Activated CD4-positive, alpha-beta memory T cell treated with anti-CD3 and anti-CD28 coated beads for 36 hours (primary cell): ENCODE measurements at regions of chr20 and their contacts with region 1.

Region 1: DNA sequence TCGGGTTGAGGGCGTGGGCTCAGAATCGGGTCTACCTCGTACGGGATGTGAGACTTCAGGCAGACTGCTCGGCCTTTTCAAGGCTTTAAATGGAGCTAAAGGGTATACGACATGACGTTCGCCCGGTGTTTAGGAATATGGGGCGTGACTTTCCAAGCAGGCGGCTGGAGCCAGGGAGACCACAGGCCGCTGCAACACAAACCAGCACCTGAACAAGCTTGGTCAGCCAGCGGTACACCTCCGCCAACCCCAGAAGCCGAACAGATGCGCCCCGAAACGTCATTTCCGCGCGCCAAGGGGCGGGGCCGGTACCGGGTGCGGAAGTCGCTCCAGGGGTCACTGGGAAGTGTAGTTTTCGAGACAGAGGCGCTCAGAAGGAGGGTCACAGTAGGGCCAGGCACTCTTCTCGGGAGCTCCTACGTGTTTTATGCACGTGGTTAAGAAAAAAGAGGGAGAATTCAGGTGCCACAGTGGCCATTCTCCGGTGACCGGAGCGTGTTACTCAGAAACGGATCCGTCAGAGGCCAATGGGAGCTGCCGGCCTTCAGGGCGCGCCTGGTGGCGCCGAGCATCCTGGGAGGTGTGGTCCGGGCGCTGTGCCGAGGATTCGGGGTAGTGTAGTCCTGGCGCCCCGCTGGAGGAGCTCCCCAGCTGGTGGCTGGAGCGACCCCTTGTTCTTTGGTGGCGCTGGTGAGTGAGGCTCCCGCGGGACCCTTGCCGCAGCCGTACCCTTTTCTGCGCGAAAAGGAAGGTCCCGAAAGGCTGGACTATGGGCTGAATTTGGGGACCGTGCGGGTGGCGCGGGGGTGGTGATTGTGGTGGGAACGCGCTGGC is at the start of gene ZNF133:
- DNase-seq: peak; percentile 98
- H3K4me3 Mint-ChIP-seq: peak within 1 kb of the TSS; percentile 96
- H3K27ac Mint-ChIP-seq: peak within 1 kb of the TSS; percentile 98
- H3K4me1 Mint-ChIP-seq: peaks cover 14% of the 10 kb centered on the region
- H3K27me3 Mint-ChIP-seq: peaks cover 17% of the 10 kb centered on the region
- total RNA-seq, gene ZNF133: 7.5 to 9.0 TPM

Region 2: GRCh38 chr20:18137412-18138265 is 150.5 kb before region 1 on chr20 and contains the starts of genes KAT14 and PET117:
- CTCF ChIA-PET with region 1: no interaction called
- POLR2A ChIA-PET with region 1: interaction called, 7 read pairs
- intact Hi-C with region 1: loop called (anchors 1 kb)
- DNase-seq: peak; percentile 93
- H3K4me3 Mint-ChIP-seq: peak within 1 kb of the TSS; percentile 65
- H3K27ac Mint-ChIP-seq: peak within 1 kb of the TSS; percentile 76
- H3K4me1 Mint-ChIP-seq: peaks cover 29% of the 10 kb centered on the region
- H3K27me3 Mint-ChIP-seq: no peaks in the 10 kb centered on the region
- total RNA-seq, gene KAT14: 14.2 to 14.4 TPM
- total RNA-seq, gene PET117: 15.2 to 15.9 TPM

Region 3: DNA sequence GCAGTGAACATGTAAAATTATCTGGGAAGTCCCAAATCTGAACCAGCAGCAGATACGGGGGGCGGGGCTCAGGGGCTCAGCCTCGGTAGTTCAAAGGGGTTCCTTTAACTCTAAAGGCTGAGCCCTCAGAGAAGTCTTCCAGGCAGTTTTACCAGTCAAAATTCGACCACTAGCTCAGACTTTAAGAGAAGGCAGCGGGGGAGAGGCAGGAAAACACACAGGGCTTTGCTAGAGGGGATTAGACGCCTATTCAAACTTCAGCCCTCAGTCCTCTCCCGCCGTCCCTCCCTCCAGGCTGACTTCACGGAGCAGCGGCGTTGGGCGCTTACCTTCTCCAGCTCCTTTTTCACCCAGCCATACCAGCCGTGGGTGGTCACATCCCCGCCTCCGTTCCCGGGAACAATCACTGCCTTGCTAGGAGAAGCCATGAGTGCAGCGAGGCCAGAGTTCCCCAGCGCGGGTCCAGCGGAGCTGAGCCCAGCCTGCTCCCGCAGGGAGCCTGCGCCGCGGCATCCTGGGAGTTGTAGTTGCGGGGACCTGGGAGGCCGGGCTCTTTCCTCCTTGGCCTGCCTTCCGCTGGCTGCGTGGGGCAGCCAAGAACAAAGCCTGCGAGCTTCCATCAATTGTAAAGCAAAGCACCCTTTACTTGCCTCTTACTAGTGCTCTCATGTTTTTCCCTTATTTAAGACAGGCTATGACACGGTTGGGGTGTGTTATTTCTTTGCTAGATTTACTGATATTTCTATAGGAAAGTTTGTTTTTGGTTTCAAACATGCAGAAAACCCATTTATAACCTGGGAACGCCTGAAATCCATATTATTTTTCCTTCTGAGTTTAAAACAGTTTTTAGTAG is 208.8 kb after region 1 on chr20 and contains the start of gene RBBP9:
- CTCF ChIA-PET with region 1: no interaction called
- POLR2A ChIA-PET with region 1: no interaction called
- intact Hi-C with region 1: loop called (anchors 2 kb)
- DNase-seq: peak; percentile 87
- H3K4me3 Mint-ChIP-seq: peak within 1 kb of the TSS; percentile 98
- H3K27ac Mint-ChIP-seq: peak within 1 kb of the TSS; percentile 84
- H3K4me1 Mint-ChIP-seq: peaks cover 9% of the 10 kb centered on the region
- H3K27me3 Mint-ChIP-seq: no peaks in the 10 kb centered on the region
- total RNA-seq, gene RBBP9: 15.9 to 17.7 TPM

Region 4: DNA sequence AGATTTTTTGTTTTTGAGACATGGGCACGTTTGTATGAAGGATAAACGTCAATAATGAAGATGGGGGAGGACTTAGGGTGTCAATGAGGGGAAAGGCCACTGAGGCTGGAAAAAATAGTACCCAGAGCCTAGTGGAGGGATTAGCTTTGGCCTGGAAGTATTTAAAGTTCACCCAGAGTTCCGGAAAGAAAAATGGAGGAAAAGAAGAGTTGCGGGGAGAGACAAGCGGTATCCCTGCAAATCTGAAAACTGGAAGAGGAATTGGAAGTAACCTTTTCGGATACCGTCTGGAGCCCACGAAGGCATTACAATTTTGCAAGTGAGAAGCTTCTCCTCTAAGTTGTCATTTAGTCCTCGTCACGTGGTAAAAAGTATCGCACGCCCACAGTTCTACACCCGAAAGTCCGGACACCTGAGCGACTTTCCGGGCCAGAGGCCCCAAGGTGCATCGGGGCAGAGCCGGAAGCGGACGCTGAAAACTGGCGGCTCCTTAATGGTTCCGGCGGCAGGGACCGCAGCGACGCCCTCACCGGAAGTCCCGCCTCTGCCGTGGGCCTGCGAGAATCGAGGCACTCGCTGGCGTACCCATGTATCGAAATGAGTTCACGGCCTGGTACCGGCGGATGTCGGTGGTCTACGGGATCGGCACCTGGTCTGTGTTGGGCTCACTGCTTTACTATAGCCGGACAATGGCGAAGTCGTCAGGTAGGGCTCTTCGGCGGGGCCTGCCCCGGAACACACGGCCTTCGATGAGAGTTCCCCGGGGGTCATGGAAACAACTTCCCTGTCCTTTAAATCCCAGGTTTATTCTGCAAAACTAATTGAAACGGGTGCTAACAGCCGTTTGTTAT is 279.0 kb after region 1 on chr20 and contains the start of gene SMIM26:
- CTCF ChIA-PET with region 1: no interaction called
- POLR2A ChIA-PET with region 1: no interaction called
- intact Hi-C with region 1: loop called (anchors 1 kb)
- DNase-seq: peak; percentile 96
- H3K4me3 Mint-ChIP-seq: peak within 1 kb of the TSS; percentile 90
- H3K27ac Mint-ChIP-seq: peak within 1 kb of the TSS; percentile 91
- H3K4me1 Mint-ChIP-seq: peaks cover 11% of the 10 kb centered on the region
- H3K27me3 Mint-ChIP-seq: no peaks in the 10 kb centered on the region
- total RNA-seq, gene SMIM26: 56.0 to 59.0 TPM

Region 5: GRCh38 chr20:18793625-18794427 is 505.7 kb after region 1 on chr20:
- CTCF ChIA-PET with region 1: no interaction called
- POLR2A ChIA-PET with region 1: no interaction called
- intact Hi-C with region 1: loop called (anchors 1 kb)
- DNase-seq: peak; percentile 91
- H3K4me3 Mint-ChIP-seq: peak overlapping the region; percentile 90
- H3K27ac Mint-ChIP-seq: peak overlapping the region; percentile 86
- H3K4me1 Mint-ChIP-seq: peaks cover 12% of the 10 kb centered on the region
- H3K27me3 Mint-ChIP-seq: peaks cover 7% of the 10 kb centered on the region